ENCODE measurements at regions of chrX and their contacts with region 1.

Region 1: GRCh38 chrX:107894038-107894437 is 68.4 kb downstream of the MID2 start:
- DNase-seq: peak in 1 of 5 donors; percentile 5
- ATAC-seq: peak in 3 of 4 donors; percentile 48 to 59 (median 51)
- H3K4me3 ChIP-seq: no peak overlapping the region
- H3K27ac ChIP-seq: no peak overlapping the region
- H3K4me1 ChIP-seq: no peaks in the 10 kb centered on the region
- H3K27me3 ChIP-seq: peaks cover 0 to 24% (median 0%) of the 10 kb centered on the region in 9 donors
- CTCF ChIP-seq: peak; percentile 40 to 75 (median 61)
- POLR2A ChIP-seq: no peak

Region 2: GRCh38 chrX:106894392-106894909 is 999.6 kb before region 1 on chrX:
- intact Hi-C with region 1: loop called in 3 of 10 experiments (anchors 5 to 10 kb)
- DNase-seq: peak in 4 of 5 donors; percentile 24 to 48 (median 38)
- ATAC-seq: peak in 3 of 4 donors; percentile 76 to 93 (median 78)
- H3K4me3 ChIP-seq: no peak overlapping the region
- H3K27ac ChIP-seq: no peak overlapping the region
- H3K4me1 ChIP-seq: peaks cover 0 to 3% (median 0%) of the 10 kb centered on the region in 12 donors
- H3K27me3 ChIP-seq: peaks cover 0 to 15% (median 0%) of the 10 kb centered on the region in 9 donors
- CTCF ChIP-seq: peak; percentile 60 to 89 (median 72)
- POLR2A ChIP-seq: no peak

Region 3: DNA sequence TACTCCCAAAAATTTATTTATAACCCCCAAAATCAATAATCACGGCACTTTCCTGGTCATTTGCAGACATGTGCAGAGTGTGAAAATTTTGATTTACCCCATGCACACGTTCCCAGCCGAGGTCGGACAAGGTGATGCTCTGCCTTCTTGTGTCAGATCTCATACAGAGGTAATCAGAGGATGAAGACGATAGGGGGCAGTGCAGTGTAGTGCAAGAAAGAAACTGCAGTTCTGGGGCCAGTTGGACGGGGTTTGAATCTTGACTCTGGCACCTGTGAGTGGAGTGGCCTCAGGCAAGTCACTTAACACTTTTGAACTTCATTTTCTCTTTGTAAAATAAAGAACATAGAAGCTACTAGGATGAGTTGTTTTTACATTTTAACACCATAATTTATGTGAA is 356.2 kb before region 1 on chrX:
- intact Hi-C with region 1: loop called in 1 of 10 experiments (anchors 5 kb)
- DNase-seq: peak in 1 of 5 donors; percentile 9
- ATAC-seq: no peak
- H3K4me3 ChIP-seq: no peak overlapping the region
- H3K27ac ChIP-seq: no peak overlapping the region
- H3K4me1 ChIP-seq: no peaks in the 10 kb centered on the region
- H3K27me3 ChIP-seq: peaks cover 0 to 12% (median 0%) of the 10 kb centered on the region in 9 donors
- CTCF ChIP-seq: peak in 11 of 12 donors; percentile 16 to 46 (median 29)
- POLR2A ChIP-seq: no peak

Region 4: GRCh38 chrX:107672955-107673378 is 221.1 kb before region 1 on chrX:
- intact Hi-C with region 1: loop called in 1 of 10 experiments (anchors 5 kb)
- DNase-seq: peak; percentile 55 to 83 (median 72)
- ATAC-seq: peak; percentile 19 to 52 (median 42)
- H3K4me3 ChIP-seq: no peak overlapping the region
- H3K27ac ChIP-seq: peak overlapping the region; percentile 53 to 98 (median 88)
- H3K4me1 ChIP-seq: peaks cover 0 to 53% (median 19%) of the 10 kb centered on the region in 12 donors
- H3K27me3 ChIP-seq: peaks cover 0 to 11% (median 0%) of the 10 kb centered on the region in 9 donors
- CTCF ChIP-seq: peak; percentile 47 to 66 (median 58)
- POLR2A ChIP-seq: peak in 1 of 2 donors; percentile 25

Region 5: DNA sequence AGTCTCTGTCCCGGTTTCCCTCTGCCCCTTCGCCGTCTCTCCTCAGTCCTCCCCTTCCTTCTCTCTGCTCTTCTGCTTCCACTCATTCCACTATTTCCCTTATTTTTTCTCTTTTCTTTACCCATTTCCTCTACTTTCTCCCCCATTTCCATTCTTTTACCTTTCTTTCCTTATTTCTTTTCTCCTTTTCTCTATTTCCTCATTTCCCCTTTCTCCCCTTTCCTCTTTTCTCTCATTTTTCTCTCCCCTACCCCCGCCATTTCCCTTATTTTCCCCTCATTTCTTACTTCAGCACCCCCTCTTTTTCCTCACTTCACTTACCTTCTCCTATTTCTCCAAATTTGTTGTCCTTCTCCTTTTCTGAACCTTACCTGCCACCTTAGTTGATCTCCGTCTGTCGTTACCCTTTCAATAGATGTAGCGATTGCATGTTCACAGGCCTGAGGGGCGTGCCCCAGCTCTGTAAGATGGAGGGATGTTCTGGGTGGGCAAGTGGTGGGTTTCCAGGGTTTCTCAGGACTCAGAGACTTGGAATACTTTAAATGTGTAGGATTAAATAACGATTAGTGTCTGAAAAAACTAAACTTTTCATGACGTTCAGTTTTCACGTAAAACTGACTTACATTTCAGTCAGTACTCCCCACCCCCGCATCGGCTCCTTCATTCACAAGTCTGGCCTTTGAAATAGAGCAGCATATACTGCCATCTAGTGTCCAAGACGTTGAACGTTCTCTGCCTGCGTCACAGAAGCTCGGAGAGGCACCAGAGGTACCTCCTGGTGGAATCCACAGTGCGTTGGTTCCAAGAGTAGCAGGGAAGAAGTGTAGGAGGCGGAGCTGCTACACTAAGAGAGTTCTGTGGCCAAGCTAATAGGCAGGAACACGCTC is 117.1 kb before region 1 on chrX:
- intact Hi-C with region 1: loop called in 2 of 10 experiments (anchors 5 to 10 kb)
- DNase-seq: peak; percentile 76 to 84 (median 77)
- ATAC-seq: peak; percentile 59 to 79 (median 74)
- H3K4me3 ChIP-seq: peak overlapping the region in 11 of 12 donors; percentile 34 to 75 (median 64)
- H3K27ac ChIP-seq: peak overlapping the region in 11 of 12 donors; percentile 58 to 91 (median 82)
- H3K4me1 ChIP-seq: peaks cover 0 to 24% (median 0%) of the 10 kb centered on the region in 12 donors
- H3K27me3 ChIP-seq: peaks cover 0 to 36% (median 0%) of the 10 kb centered on the region in 9 donors
- CTCF ChIP-seq: peak; percentile 55 to 75 (median 72)
- POLR2A ChIP-seq: no peak

Region 6: DNA sequence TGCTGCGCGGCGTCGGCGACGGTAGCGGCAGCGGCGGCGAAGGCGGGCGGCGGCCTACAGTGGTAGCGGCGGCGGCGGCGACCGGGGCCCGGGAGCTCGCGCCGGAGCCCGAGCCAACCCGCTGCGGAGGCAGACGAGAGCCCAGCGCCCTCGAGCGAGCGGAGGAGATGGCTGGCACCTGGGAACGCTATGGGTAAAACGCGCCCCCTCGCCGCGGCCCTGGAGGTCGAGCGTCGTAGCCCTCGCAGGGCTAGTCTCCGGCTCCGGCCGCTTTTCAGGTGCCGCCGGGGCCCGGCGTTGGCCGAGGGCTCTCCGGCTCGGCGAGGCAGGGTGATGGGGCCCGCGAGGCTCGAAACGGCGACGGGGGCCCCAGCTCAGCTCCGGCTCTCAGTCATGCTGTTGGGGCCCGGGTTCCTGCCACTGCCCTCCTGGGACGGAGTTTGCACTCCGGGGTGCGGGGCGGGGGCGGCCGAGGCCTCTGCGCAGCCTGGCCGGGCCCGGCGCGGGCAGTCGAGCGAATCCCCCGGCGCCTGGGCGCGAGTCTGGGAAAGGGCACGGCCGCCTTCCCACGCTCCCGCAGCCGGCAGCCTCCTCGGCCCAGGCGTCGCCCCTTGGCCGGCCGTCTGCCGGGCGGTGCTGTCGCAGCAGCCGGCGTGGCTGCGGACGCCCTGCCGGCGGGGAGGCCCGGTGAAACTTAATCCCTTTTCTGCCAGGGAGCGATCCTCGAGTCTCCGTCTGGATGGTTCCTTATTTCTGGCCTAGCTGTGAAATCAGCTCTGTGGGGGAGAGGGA is 67.6 kb before region 1 on chrX:
- intact Hi-C with region 1: loop called in 1 of 10 experiments (anchors 10 kb)
- DNase-seq: peak; percentile 12 to 63 (median 32)
- ATAC-seq: peak in 3 of 4 donors; percentile 47 to 79 (median 76)
- H3K4me3 ChIP-seq: peak overlapping the region; percentile 31 to 70 (median 58)
- H3K27ac ChIP-seq: peak overlapping the region; percentile 73 to 90 (median 84)
- H3K4me1 ChIP-seq: peaks cover 0 to 5% (median 0%) of the 10 kb centered on the region in 12 donors
- H3K27me3 ChIP-seq: peaks cover 0 to 55% (median 0%) of the 10 kb centered on the region in 9 donors
- CTCF ChIP-seq: no peak
- POLR2A ChIP-seq: no peak

Region 7: DNA sequence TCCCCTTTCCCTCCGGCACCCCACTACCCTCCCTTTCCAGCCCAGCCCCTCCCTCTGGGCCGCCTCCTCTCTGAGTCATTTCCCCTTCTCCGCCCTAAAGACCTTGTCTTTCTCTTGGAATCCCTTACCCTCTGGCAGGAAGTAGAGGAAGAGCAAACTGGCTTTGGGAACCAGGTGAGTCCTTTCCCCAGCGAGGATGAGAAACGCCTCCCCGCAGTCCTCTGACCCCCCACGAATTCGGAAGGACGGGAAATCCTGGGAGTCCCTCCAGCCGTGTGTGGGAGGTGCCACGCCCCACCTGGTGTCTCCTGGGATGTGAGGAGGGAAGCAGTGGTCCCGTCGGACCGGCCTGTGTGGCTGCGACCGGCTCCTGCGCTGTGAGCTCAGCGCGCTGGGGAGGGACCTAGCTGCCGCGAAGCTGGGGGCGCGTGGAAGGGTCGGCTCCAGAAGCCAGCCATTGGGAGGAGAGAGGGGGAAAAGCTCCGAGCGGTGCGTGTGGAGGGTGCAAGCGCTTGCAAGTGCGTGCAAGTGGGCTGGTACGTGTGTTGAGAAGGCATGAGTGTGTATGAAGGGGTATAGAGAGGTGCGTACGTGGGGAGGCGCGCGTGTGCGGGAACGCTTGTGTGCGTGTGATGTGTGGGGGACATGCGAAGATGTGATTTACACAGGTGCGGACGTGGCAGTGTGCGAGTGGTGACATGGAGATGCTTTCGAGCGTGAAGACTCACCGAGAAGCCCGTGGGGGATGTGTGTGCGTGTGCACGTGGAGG is 41.8 kb after region 1 on chrX:
- intact Hi-C with region 1: no loop called
- DNase-seq: peak in 1 of 5 donors; percentile 15
- ATAC-seq: peak in 1 of 4 donors; percentile 22
- H3K4me3 ChIP-seq: peak overlapping the region in 7 of 12 donors; percentile 7 to 39 (median 20)
- H3K27ac ChIP-seq: no peak overlapping the region
- H3K4me1 ChIP-seq: no peaks in the 10 kb centered on the region
- H3K27me3 ChIP-seq: peaks cover 0 to 28% (median 0%) of the 10 kb centered on the region in 9 donors
- CTCF ChIP-seq: no peak
- POLR2A ChIP-seq: no peak

Measured in heart left ventricle (tissue), 16 donors.